ENCODE measurements at regions of chr9 and their contacts with region 1.

Region 1: GRCh38 chr9:26789959-26790358 is 102.6 kb downstream of the CAAP1 start:
- DNase-seq: no peak
- H3K4me3 ChIP-seq: no peak overlapping the region
- CTCF ChIP-seq: no peak

Region 2: DNA sequence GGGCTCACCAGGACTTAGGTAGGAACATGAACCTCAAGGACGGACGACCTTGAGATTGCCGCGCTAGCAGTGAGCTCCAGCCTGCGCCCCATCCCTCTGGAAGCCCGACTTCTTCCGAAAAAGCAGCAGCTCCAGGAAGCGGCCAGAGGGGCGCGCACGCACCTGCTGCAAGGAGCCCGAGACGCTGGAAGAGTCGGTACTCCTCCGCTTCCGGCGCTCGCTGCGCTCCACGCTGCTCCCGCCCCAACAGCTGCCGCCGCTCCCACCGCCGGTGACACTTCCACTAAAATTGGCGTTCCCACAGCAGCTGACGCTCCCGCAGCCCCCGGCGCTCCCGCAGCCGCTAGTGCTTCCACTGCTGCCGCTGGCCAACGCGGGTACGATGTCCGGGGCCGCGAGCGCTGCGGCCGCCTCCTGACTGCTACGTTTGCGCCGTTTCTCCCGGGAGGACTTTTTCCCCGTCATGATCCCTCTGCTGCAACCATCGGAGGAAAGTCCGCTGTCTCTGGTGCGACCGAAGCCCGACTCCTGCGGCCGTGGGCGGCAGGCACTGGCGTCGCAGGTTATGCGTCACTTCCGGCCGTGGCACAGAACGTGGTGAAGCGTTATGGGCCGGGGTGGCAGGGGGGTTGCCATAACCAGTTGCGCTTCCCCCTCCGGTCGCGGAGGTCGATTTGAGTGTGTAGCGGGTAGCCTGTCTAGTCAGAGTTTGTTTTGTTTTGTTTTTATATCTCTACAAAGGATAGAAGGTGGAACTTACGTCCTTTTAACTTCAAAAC is 102.5 kb after region 1 on chr9 and contains the start of gene CAAP1:
- in situ Hi-C with region 1: loop called (anchors 25 kb)
- DNase-seq: peak; percentile 74
- H3K4me3 ChIP-seq: peak within 1 kb of the TSS; percentile 90
- CTCF ChIP-seq: peak; percentile 37

Region 3: DNA sequence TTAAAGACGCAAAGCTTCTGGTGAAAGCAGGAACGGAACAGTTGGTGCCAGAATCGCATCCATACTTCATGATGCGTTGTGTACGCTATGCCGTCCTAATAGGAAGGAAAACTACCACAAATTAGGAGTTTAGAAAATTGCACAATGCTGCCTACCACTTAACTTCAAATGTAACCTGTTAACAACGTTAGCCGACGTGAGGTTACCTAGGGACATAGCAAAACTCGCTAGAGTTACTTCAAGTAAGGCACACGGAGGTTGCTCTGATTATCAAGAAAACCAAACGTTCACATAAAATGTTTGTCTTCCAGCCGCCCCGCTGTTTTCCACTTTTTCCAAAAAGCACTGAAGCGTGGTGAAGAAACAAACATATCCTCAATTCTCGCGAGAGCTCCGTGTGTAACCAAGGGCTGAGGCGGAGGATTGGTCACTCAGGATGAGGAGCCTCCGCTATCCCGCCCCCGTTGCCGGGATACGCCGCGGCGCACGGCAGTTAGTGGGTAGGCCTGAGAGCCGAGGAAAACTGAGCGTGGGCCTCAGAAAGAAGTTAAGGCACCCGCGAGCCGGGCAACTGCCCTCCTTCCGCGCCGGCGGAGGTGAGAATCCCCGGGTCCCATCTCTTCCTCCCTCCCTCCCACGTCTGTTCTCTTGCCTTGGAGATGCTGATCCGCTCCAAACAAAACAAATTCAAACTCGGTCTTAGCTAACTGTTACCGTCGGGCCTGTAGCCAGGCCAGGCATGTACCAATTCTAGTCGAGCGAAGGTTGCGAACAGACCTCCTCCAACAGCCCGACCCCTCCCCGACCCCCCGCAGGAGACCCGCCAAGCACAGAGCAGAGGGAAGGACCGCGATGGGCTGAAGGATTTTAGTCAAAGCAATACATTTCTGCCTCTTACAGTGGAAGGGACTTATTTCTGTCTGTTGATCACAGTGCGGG is 166.2 kb after region 1 on chr9 and contains the start of gene IFT74:
- in situ Hi-C with region 1: no loop called
- DNase-seq: peak; percentile 96
- H3K4me3 ChIP-seq: peak within 1 kb of the TSS; percentile 64
- CTCF ChIP-seq: no peak